CD8-positive, alpha-beta memory T cell (primary cell): ENCODE measurements at regions of chr2 and their contacts with region 1.

Region 1: DNA sequence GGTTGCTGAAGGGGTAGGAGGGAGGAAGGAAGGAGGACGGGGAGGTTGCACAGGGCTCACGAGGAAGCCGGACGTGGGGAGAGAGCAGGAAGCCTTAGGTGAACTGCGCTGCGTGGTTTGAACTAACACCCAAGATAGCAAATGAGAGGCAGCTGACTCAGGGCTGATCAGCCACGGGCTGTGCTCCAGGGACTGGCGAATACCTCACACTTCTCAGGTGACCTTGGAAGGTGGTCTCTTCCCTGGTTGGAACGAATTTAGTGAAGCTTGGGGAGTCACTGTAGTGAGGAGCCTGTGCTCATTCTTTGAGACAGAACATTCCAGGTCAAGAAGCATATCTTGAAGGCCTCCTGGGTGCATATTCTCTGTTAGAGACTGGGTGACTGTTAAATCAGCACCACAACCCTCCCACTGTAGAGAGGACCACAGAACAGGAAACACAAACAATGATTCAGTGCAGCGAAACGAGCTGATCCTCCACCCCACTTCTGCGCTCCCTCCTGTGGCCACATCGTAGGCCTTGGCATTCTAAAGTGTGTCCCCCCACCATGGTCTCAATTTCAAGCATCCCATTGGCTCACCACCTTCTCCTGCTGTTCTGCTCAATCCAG is 33.8 kb downstream of the TOGARAM2 start:
- DNase-seq: peak; percentile 64 to 87 (median 76)
- H3K4me3 ChIP-seq: peak overlapping the region; percentile 52
- H3K4me3 Mint-ChIP-seq: peak overlapping the region; percentile 80 to 93 (median 88)
- H3K27ac ChIP-seq: peak overlapping the region; percentile 93
- H3K27ac Mint-ChIP-seq: peak overlapping the region; percentile 96 to 100 (median 99)
- H3K4me1 ChIP-seq: peaks cover 81% of the 10 kb centered on the region
- H3K4me1 Mint-ChIP-seq: peaks cover 77 to 95% (median 87%) of the 10 kb centered on the region in 3 donors
- H3K27me3 ChIP-seq: no peaks in the 10 kb centered on the region
- H3K27me3 Mint-ChIP-seq: peaks cover 0 to 4% of the 10 kb centered on the region in 2 donors

Region 2: GRCh38 chr2:28958689-28959088 is 56.2 kb before region 1 on chr2:
- CTCF ChIA-PET with region 1: interaction called, 15 read pairs
- POLR2A ChIA-PET with region 1: interaction called, 3 read pairs
- DNase-seq: peak in 3 of 5 donors; percentile 29 to 57 (median 50)
- H3K4me3 ChIP-seq: no peak overlapping the region
- H3K4me3 Mint-ChIP-seq: no peak overlapping the region
- H3K27ac ChIP-seq: no peak overlapping the region
- H3K27ac Mint-ChIP-seq: peak overlapping the region in 1 of 8 donors; percentile 11
- H3K4me1 ChIP-seq: no peaks in the 10 kb centered on the region
- H3K4me1 Mint-ChIP-seq: peaks cover 0 to 15% (median 5%) of the 10 kb centered on the region in 3 donors
- H3K27me3 ChIP-seq: no peaks in the 10 kb centered on the region
- H3K27me3 Mint-ChIP-seq: no peaks in the 10 kb centered on the region

Region 3: DNA sequence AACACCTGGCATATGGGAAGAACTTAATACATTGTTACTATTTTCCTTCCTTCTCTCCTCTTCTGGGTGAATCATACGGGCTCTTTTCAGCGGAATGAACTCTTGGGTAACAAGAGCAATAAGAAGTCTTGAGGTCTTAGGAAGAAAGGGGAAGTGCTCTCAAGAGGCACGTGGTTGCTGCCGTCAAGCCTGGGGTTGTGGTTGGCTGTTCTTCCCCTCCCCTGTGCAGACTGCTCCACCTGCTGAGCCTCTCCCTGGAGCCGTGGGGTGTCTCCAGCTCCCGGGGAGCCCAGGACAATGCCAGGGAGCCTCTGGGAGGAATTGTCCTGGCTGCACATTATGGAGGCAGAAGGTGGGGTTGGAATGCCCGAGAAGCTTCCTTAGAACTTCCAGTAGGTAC is 14.4 kb before region 1 on chr2:
- CTCF ChIA-PET with region 1: interaction called, 45 read pairs
- POLR2A ChIA-PET with region 1: interaction called, 36 read pairs
- DNase-seq: peak; percentile 32 to 74 (median 60)
- H3K4me3 ChIP-seq: peak overlapping the region; percentile 5
- H3K4me3 Mint-ChIP-seq: peak overlapping the region in 6 of 7 donors; percentile 1 to 70 (median 46)
- H3K27ac ChIP-seq: no peak overlapping the region
- H3K27ac Mint-ChIP-seq: peak overlapping the region; percentile 66 to 99 (median 97)
- H3K4me1 ChIP-seq: peaks cover 31% of the 10 kb centered on the region
- H3K4me1 Mint-ChIP-seq: peaks cover 33 to 37% (median 34%) of the 10 kb centered on the region in 3 donors
- H3K27me3 ChIP-seq: no peaks in the 10 kb centered on the region
- H3K27me3 Mint-ChIP-seq: peaks cover 0 to 2% of the 10 kb centered on the region in 2 donors

Region 4: GRCh38 chr2:29035016-29035745 is 20.3 kb after region 1 on chr2:
- CTCF ChIA-PET with region 1: interaction called, 11 read pairs
- POLR2A ChIA-PET with region 1: no interaction called
- DNase-seq: no peak
- H3K4me3 ChIP-seq: no peak overlapping the region
- H3K4me3 Mint-ChIP-seq: peak overlapping the region in 2 of 7 donors; percentile 15 to 76
- H3K27ac ChIP-seq: no peak overlapping the region
- H3K27ac Mint-ChIP-seq: peak overlapping the region in 5 of 8 donors; percentile 51 to 90 (median 61)
- H3K4me1 ChIP-seq: peaks cover 7% of the 10 kb centered on the region
- H3K4me1 Mint-ChIP-seq: peaks cover 18 to 31% (median 23%) of the 10 kb centered on the region in 3 donors
- H3K27me3 ChIP-seq: no peaks in the 10 kb centered on the region
- H3K27me3 Mint-ChIP-seq: peaks cover 0 to 1% of the 10 kb centered on the region in 2 donors

Region 5: DNA sequence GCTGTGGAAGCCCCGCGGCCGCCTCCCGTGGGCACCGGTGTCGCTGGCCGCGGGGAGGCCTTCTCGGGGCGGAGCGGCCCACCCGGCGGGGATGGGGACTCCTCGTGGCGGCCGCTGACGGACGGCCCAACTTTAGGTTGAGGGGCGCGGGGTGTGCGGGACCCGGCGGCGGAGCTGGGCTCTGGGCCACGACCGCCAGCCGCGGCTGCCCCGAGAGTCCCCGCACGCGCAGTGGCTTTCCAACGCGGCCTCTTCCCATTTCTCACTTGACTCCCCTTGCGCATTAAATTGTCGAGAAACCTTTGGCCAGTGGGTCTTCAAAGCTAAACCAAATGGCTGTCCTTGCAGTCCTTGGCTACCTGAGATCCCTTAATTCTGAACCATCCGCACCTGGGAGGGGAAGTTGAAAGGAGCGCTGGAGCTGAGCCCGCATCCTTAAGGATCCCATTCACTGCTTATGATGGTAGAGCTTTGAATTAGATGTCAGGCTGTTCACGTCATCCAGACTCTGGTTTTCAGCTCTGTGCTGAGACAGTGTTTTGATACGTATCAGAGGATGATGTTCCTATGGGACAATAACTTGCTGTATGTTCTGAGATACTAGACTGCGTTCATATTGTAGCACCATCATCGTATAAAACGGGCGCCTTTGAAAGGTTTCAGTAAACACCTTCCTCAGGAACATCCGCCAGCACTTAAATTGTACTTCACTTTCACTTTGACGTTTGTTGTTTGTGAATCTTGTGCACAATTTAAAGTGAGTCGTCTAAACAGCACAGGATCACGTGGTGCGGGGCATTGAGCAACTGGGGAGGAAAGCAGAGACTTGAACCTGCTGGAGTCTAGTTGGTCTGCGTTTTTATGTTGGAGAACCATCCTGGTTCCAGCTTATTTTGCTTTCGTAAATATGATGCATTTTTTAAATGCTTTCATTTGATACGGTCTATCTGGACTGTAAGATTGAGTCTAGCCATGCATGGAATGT is 101.2 kb after region 1 on chr2:
- CTCF ChIA-PET with region 1: interaction called, 27 read pairs
- POLR2A ChIA-PET with region 1: interaction called, 83 read pairs
- DNase-seq: peak; percentile 58 to 84 (median 73)
- H3K4me3 ChIP-seq: peak overlapping the region; percentile 80
- H3K4me3 Mint-ChIP-seq: peak overlapping the region; percentile 89 to 98 (median 95)
- H3K27ac ChIP-seq: peak overlapping the region; percentile 78
- H3K27ac Mint-ChIP-seq: peak overlapping the region; percentile 87 to 98 (median 98)
- H3K4me1 ChIP-seq: peaks cover 38% of the 10 kb centered on the region
- H3K4me1 Mint-ChIP-seq: peaks cover 51 to 59% (median 56%) of the 10 kb centered on the region in 3 donors
- H3K27me3 ChIP-seq: no peaks in the 10 kb centered on the region
- H3K27me3 Mint-ChIP-seq: no peaks in the 10 kb centered on the region